ENCODE measurements at regions of chr13 and their contacts with region 1.

Region 1: GRCh38 chr13:39577838-39578491 is 25.0 kb downstream of the LHFPL6 start:
- DNase-seq: peak in 4 of 5 donors; percentile 56 to 78 (median 66)
- ATAC-seq: peak; percentile 36 to 56 (median 44)
- H3K4me3 ChIP-seq: no peak overlapping the region
- H3K27ac ChIP-seq: peak overlapping the region in 11 of 12 donors; percentile 20 to 72 (median 46)
- H3K4me1 ChIP-seq: peaks cover 11 to 81% (median 57%) of the 10 kb centered on the region in 12 donors
- H3K27me3 ChIP-seq: no peaks in the 10 kb centered on the region
- CTCF ChIP-seq: no peak
- POLR2A ChIP-seq: no peak

Region 2: GRCh38 chr13:39527961-39528660 is 49.9 kb before region 1 on chr13:
- intact Hi-C with region 1: loop called in 4 of 10 experiments (anchors 10 kb)
- DNase-seq: peak in 1 of 5 donors; percentile 50
- ATAC-seq: peak in 3 of 4 donors; percentile 53 to 73 (median 67)
- H3K4me3 ChIP-seq: no peak overlapping the region
- H3K27ac ChIP-seq: peak overlapping the region in 9 of 12 donors; percentile 2 to 36 (median 9)
- H3K4me1 ChIP-seq: peaks cover 3 to 88% (median 65%) of the 10 kb centered on the region in 12 donors
- H3K27me3 ChIP-seq: no peaks in the 10 kb centered on the region
- CTCF ChIP-seq: no peak
- POLR2A ChIP-seq: no peak

Region 3: DNA sequence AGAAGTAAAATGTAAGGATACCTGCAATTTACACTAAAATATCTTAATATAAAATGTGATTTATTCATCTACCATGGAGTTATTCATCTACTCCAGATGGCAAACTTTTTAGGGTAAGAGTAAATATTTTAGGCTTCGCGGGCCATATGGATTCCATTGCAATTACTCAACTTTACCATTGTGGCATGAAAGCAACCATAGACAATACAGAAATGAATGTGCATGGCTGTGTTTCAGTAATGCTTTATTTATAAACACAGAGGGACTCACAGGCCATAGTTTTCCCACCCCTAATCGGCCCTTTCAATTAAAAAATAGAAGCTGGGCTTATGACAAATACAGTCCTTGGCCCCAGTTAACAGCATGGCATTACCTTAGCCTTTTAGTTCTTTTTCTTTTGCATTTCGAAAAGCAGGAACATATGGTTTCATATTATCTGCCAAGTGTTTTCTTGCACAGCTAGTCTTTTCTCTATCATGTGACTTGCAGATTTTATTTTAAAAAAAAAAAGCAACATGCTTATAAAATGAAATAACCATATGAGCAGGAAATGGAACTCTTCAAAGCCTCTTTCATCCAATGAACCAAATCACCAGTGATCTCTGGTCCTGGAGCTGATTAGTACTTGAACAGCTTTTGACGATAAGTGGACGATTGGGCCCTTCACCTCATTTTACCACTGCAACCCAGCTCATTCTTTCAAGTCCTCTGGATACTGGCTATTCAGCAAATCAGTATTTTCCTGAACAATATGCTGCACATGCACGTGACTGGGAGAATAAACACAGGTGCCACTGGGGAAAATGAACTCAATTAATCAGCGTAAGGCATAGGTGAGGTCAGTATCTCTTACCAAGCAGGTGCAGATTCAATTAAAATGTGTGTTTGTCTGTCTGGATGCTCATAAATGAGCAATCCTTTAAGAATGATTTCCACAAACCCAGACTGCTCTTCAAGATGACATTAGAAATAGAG is 38.9 kb before region 1 on chr13:
- intact Hi-C with region 1: loop called in 1 of 10 experiments (anchors 5 kb)
- DNase-seq: no peak
- ATAC-seq: no peak
- H3K4me3 ChIP-seq: no peak overlapping the region
- H3K27ac ChIP-seq: no peak overlapping the region
- H3K4me1 ChIP-seq: peaks cover 0 to 87% (median 49%) of the 10 kb centered on the region in 12 donors
- H3K27me3 ChIP-seq: no peaks in the 10 kb centered on the region
- CTCF ChIP-seq: no peak
- POLR2A ChIP-seq: no peak

Measured in heart left ventricle (tissue), 16 donors.